ENCODE measurements at regions of chr4 and their contacts with region 1.

Region 1: GRCh38 chr4:10018818-10019461 is 2.4 kb downstream of the SLC2A9 start:
- DNase-seq: peak; percentile 99
- ATAC-seq: peak; percentile 93

Region 2: GRCh38 chr4:9704551-9705332 is 314.2 kb before region 1 on chr4:
- intact Hi-C with region 1: loop called (anchors 10 kb)
- DNase-seq: no peak
- ATAC-seq: no peak

Region 3: GRCh38 chr4:9898596-9899305 is 120.2 kb before region 1 on chr4:
- intact Hi-C with region 1: loop called (anchors 5 kb)
- DNase-seq: peak; percentile 72
- ATAC-seq: peak; percentile 91

Region 4: DNA sequence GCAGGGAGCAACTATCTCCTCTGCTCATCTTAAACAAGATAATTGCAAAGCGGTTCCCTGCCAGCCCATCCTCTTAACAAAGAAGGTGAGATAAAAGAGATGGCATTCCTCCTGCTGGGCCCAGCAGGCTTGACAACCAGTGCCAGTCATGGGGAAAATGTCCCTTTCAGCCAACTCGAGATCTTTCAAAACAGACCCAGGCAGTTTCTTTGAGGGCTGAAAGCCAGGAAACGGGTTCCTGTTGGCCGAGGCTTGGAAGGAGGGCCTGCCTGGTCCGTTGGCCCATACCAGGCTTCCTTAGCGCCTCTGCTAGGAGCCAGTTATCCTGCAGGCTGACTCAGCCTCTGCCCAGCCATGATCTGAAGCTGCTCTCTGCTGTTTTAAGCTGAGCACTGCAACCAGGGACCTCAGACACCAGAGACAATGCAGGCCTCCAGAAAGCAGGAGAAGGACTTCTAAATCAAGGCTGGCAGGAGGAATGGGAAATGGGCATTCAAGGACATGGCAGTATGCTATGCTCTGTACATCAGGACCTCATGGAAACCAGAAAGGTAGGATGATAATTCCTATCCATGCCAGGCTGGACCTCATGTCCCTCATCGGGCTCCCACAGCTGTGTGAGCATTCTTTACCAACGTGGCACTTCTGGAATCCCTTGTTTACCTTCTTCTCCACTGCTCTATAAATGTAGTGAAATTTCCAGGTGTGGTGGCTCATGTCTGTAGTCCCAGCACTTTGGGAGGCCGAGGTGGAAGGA is 44.8 kb after region 1 on chr4:
- intact Hi-C with region 1: loop called (anchors 2 kb)
- DNase-seq: peak; percentile 82
- ATAC-seq: peak; percentile 96

Region 5: GRCh38 chr4:10129196-10130177 is 110.5 kb after region 1 on chr4:
- intact Hi-C with region 1: no loop called
- DNase-seq: no peak
- ATAC-seq: peak; percentile 53

Measured in Right ventricle myocardium superior (tissue), 1 donor.